ENCODE measurements at regions of chr11 and their contacts with region 1.

Region 1: DNA sequence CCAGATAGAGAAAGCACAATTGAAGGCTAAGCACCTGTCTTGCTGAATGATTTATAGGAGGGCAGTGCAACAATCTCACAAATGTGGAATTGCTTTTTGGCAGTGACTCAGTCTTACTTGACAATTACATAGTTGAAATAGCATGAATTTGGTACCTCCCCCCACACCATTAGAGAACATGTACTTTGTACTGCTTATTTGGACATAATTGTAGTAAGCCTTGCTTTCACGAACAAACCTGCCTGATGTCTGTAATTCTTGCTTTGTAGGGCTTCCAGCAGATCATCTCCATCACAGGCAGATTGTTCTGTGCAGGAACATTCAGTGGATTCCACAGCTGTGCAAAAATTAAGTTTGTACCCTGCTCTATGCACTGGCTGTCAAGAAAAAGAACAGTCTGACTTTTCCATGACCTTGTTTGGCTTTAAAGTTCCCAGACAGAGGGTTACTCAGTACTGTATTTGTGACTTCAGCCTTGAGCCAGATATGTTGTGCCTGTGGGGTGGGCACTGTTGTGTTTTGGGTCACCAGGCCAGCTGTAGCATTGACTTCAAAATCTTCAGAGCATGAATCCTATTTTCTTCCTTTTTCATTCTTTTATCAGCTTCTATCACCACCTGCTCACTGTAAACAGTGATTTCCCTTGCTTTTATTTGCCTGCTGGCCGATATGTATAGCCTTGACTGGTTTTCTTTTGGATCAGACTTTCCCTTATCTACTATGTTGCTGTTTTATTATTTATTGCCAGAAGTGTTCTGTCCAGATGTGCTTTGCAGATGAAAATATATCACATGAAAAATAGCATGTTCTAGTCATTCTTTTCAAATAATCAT is 941.0 kb upstream of the CHORDC1 start:
- DNase-seq: peak; percentile 52 to 81
- H3K4me3 ChIP-seq: no peak overlapping the region
- H3K4me3 Mint-ChIP-seq: peak overlapping the region; percentile 49
- H3K27ac Mint-ChIP-seq: peak overlapping the region; percentile 58
- H3K4me1 ChIP-seq: peaks cover 30% of the 10 kb centered on the region
- H3K4me1 Mint-ChIP-seq: peaks cover 35% of the 10 kb centered on the region
- H3K27me3 ChIP-seq: no peaks in the 10 kb centered on the region
- H3K27me3 Mint-ChIP-seq: no peaks in the 10 kb centered on the region
- CTCF ChIP-seq: no peak

Region 2: GRCh38 chr11:89267660-89268302 is 1896.1 kb before region 1 on chr11:
- CTCF ChIA-PET with region 1: no interaction called
- POLR2A ChIA-PET with region 1: no interaction called
- intact Hi-C with region 1: loop called (anchors 5 kb)
- DNase-seq: no peak
- H3K4me3 ChIP-seq: no peak overlapping the region
- H3K4me3 Mint-ChIP-seq: no peak overlapping the region
- H3K27ac Mint-ChIP-seq: no peak overlapping the region
- H3K4me1 ChIP-seq: 0 out of 2 replicates have a peak, but pooled peaks cover 4% of the 10 kb centered on the region
- H3K4me1 Mint-ChIP-seq: peaks cover 13% of the 10 kb centered on the region
- H3K27me3 ChIP-seq: no peaks in the 10 kb centered on the region
- H3K27me3 Mint-ChIP-seq: no peaks in the 10 kb centered on the region
- CTCF ChIP-seq: no peak

Region 3: DNA sequence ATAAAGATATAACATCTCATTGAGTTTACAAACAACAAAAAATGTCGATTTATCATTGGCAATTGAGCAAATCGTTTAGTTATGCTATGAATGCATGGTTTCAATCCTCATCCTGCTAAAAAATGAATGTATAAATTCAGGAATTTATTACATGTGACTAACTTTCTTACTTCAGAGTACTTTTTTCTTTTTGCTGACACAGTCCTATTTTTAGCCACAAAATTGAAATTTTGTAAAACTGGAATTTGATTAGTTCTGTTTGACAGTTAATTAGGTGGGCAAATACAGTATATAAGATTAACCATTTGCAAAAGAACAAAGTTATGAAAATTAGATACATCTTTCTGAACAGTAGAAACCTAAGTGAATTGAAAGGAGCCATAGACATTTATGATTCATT is 15.9 kb before region 1 on chr11:
- CTCF ChIA-PET with region 1: no interaction called
- POLR2A ChIA-PET with region 1: no interaction called
- intact Hi-C with region 1: no loop called
- DNase-seq: no peak
- H3K4me3 ChIP-seq: no peak overlapping the region
- H3K4me3 Mint-ChIP-seq: no peak overlapping the region
- H3K27ac Mint-ChIP-seq: no peak overlapping the region
- H3K4me1 ChIP-seq: peaks cover 6% of the 10 kb centered on the region
- H3K4me1 Mint-ChIP-seq: no peaks in the 10 kb centered on the region
- H3K27me3 ChIP-seq: no peaks in the 10 kb centered on the region
- H3K27me3 Mint-ChIP-seq: no peaks in the 10 kb centered on the region
- CTCF ChIP-seq: no peak

Region 4: GRCh38 chr11:91199866-91200265 is 36.0 kb after region 1 on chr11:
- CTCF ChIA-PET with region 1: no interaction called
- POLR2A ChIA-PET with region 1: no interaction called
- intact Hi-C with region 1: no loop called
- DNase-seq: no peak
- H3K4me3 ChIP-seq: no peak overlapping the region
- H3K4me3 Mint-ChIP-seq: no peak overlapping the region
- H3K27ac Mint-ChIP-seq: no peak overlapping the region
- H3K4me1 ChIP-seq: no peaks in the 10 kb centered on the region
- H3K4me1 Mint-ChIP-seq: no peaks in the 10 kb centered on the region
- H3K27me3 ChIP-seq: no peaks in the 10 kb centered on the region
- H3K27me3 Mint-ChIP-seq: no peaks in the 10 kb centered on the region
- CTCF ChIP-seq: no peak

Region 5: DNA sequence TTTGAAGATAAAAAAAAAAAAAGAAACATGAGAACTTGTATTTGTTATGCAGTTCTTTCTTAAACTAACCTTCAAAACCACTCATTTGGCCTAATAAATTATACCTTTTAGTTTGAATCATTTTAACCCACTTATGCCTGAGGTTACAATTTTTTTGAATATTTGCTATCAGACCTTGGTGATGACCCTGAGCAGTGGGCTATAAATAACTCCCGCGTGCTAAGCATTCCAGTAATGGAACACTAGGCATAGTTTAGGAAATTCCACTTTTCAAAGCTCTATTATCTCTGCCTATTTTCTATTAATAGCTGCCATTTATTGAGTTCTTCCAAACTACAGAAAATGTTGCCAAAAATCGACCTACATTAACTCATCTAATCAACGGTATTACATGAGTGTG is 67.4 kb after region 1 on chr11:
- CTCF ChIA-PET with region 1: no interaction called
- POLR2A ChIA-PET with region 1: no interaction called
- intact Hi-C with region 1: loop called (anchors 2 kb)
- DNase-seq: no peak
- H3K4me3 ChIP-seq: no peak overlapping the region
- H3K4me3 Mint-ChIP-seq: peak overlapping the region; percentile 1
- H3K27ac Mint-ChIP-seq: peak overlapping the region; percentile 37
- H3K4me1 ChIP-seq: peaks cover 19% of the 10 kb centered on the region
- H3K4me1 Mint-ChIP-seq: peaks cover 16% of the 10 kb centered on the region
- H3K27me3 ChIP-seq: no peaks in the 10 kb centered on the region
- H3K27me3 Mint-ChIP-seq: no peaks in the 10 kb centered on the region
- CTCF ChIP-seq: no peak